ENCODE measurements at regions of chr6 and their contacts with region 1.

Region 1: GRCh38 chr6:44074439-44075136 is 52.7 kb downstream of the MRPL14 start:
- DNase-seq: peak; percentile 72 to 76 (median 74)
- ATAC-seq: peak; percentile 55
- H3K4me3 ChIP-seq: no peak overlapping the region
- H3K27ac ChIP-seq: peak overlapping the region in 1 of 4 donors; percentile 36
- H3K4me1 ChIP-seq: peaks cover 34% of the 10 kb centered on the region
- H3K27me3 ChIP-seq: no peaks in the 10 kb centered on the region
- CTCF ChIP-seq: peak; percentile 80 to 93 (median 87)
- POLR2A ChIP-seq: no peak

Region 2: GRCh38 chr6:43951063-43951755 is 123.4 kb before region 1 on chr6:
- intact Hi-C with region 1: loop called (anchors 10 kb)
- DNase-seq: peak; percentile 78 to 89 (median 86)
- ATAC-seq: peak; percentile 92
- H3K4me3 ChIP-seq: no peak overlapping the region
- H3K27ac ChIP-seq: no peak overlapping the region
- H3K4me1 ChIP-seq: peaks cover 21% of the 10 kb centered on the region
- H3K27me3 ChIP-seq: no peaks in the 10 kb centered on the region
- CTCF ChIP-seq: peak; percentile 57 to 96 (median 88)
- POLR2A ChIP-seq: no peak

Region 3: GRCh38 chr6:44010411-44011349 is 63.9 kb before region 1 on chr6:
- intact Hi-C with region 1: no loop called
- DNase-seq: peak in 3 of 4 donors; percentile 24 to 52 (median 45)
- ATAC-seq: no peak
- H3K4me3 ChIP-seq: no peak overlapping the region
- H3K27ac ChIP-seq: no peak overlapping the region
- H3K4me1 ChIP-seq: peaks cover 15% of the 10 kb centered on the region
- H3K27me3 ChIP-seq: no peaks in the 10 kb centered on the region
- CTCF ChIP-seq: no peak
- POLR2A ChIP-seq: no peak

Region 4: DNA sequence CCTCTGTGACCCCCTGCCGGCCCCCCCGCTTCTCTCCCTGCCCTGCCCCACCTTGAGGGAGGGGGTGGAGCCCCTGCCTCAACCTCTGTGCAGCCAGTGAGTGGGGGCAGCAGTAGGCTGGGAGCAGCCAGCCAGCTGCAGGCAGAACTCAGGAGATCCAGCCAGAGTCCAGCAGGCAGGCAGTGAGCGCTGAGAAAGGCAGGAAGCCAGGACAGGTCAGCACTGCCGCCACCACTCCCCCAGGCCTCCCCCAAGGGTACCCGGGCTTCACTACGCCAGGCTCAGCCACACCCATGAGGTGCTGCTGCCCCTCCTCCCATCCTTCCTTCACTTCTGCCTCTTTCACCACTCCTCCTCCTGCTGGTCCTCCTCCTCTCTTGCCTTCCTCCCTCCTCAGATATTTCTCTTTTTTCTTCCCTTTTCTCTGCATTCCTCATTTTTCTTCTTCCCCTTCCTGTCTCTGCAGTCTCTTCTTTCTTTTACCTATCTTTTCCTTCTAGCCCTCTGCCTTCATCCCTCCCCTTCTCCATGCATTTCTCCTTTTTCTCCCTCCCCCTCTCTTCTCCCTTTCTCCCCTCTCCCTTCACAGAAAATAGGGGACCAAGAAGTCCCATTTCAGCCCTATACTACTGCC is 64.2 kb after region 1 on chr6:
- intact Hi-C with region 1: no loop called
- DNase-seq: no peak
- ATAC-seq: no peak
- H3K4me3 ChIP-seq: no peak overlapping the region
- H3K27ac ChIP-seq: no peak overlapping the region
- H3K4me1 ChIP-seq: no peaks in the 10 kb centered on the region
- H3K27me3 ChIP-seq: no peaks in the 10 kb centered on the region
- CTCF ChIP-seq: no peak
- POLR2A ChIP-seq: no peak

Region 5: GRCh38 chr6:44192428-44193041 is 117.9 kb after region 1 on chr6:
- intact Hi-C with region 1: no loop called
- DNase-seq: no peak
- ATAC-seq: peak; percentile 52
- H3K4me3 ChIP-seq: no peak overlapping the region
- H3K27ac ChIP-seq: peak overlapping the region in 1 of 4 donors; percentile 21
- H3K4me1 ChIP-seq: no peaks in the 10 kb centered on the region
- H3K27me3 ChIP-seq: no peaks in the 10 kb centered on the region
- CTCF ChIP-seq: no peak
- POLR2A ChIP-seq: no peak

Measured in body of pancreas (tissue), 4 donors.